HepG2 (cell line): ENCODE measurements at regions of chr16 and their contacts with region 1.

Region 1: DNA sequence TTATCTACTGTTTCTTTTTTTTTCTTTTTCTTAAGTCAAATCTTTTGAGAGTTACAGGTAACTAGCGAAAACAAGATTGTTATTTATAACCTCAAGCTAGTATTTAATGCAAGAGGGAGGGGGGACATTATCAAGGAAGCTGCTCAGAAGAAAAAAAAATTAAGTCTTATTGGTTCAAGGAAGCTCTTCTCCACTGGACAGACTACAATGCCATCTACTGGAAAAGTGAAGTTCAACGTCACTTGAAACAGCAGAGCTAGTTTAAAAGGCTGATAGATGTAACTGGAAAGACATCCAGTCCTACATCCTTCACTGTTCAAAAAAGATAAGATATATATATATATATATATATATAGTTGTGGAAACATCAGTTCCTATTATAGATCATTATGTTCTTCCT is 418.0 kb upstream of the PSMD7 start:
- DNase-seq: peak; percentile 58
- ATAC-seq: peak; percentile 49; the same call in 2 of the 3 replicates
- H3K4me3 ChIP-seq: no peak overlapping the region
- H3K27ac ChIP-seq: no peak overlapping the region
- H3K4me1 ChIP-seq: no peaks in the 10 kb centered on the region
- H3K27me3 ChIP-seq: peaks cover 0 to under 1% of the 10 kb centered on the region in 2 experiments; a peak in 1 of 5 replicates
- CTCF ChIP-seq: peak; percentile 67
- EP300 ChIP-seq: no peak
- POLR2A ChIP-seq: no peak
- RAD21 ChIP-seq: no peak

Region 2: GRCh38 chr16:73565262-73565661 is 313.3 kb before region 1 on chr16:
- CTCF ChIA-PET with region 1: interaction called, 7 read pairs
- POLR2A ChIA-PET with region 1: no interaction called
- in situ Hi-C with region 1: loop called (anchors 5 kb)
- intact Hi-C with region 1: no loop called
- DNase-seq: peak; percentile 23
- ATAC-seq: peak; percentile 70
- H3K4me3 ChIP-seq: no peak overlapping the region
- H3K27ac ChIP-seq: no peak overlapping the region
- H3K4me1 ChIP-seq: no peaks in the 10 kb centered on the region
- H3K27me3 ChIP-seq: peaks cover 0 to 31% of the 10 kb centered on the region in 2 experiments; a peak in 3 of 5 replicates
- CTCF ChIP-seq: peak; percentile 57
- EP300 ChIP-seq: no peak
- POLR2A ChIP-seq: no peak
- RAD21 ChIP-seq: 0 out of 2 replicates have a peak, but pooled peaks have one; percentile 22

Region 3: GRCh38 chr16:73713778-73714495 is 164.7 kb before region 1 on chr16:
- CTCF ChIA-PET with region 1: interaction called, 12 read pairs
- POLR2A ChIA-PET with region 1: no interaction called
- in situ Hi-C with region 1: loop called (anchors 10 kb)
- intact Hi-C with region 1: loop called (anchors 1 kb)
- DNase-seq: peak; percentile 42
- ATAC-seq: peak; percentile 76
- H3K4me3 ChIP-seq: no peak overlapping the region
- H3K27ac ChIP-seq: no peak overlapping the region
- H3K4me1 ChIP-seq: no peaks in the 10 kb centered on the region
- H3K27me3 ChIP-seq: peaks cover 2 to 9% of the 10 kb centered on the region in 2 experiments; a peak in 3 of 5 replicates
- CTCF ChIP-seq: peak; percentile 63
- EP300 ChIP-seq: no peak
- POLR2A ChIP-seq: no peak
- RAD21 ChIP-seq: peak; percentile 33; the same call in 1 of the 2 replicates

Region 4: DNA sequence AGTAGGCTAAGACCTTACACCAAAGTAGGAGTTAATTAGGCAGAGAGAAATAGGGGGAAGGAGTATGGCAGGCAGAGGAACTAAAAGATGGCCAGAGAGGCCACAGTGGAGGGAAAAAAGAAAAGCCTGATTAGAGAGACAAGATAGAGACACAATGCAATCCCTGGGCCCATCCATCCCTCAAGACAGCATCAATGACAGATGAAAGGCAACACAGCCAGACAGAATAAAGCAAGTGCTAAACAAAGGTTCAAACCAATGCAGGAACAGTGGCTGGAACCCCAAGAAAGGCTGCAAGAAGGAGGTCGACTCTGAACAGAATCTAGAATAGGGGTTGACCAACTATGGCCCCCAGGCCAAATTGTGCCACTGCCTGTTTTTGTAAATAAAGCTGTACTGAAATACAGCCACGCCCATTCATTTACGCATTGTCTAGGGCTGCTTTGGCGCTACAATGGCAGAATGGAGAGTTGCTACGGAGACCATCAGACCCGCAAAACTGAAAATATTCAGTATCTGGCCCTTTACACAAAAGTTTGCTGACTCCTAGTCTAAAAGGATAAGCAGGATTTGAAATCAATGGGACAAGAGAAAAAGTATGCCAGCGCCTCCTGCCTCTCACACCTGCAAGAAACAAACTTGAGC is 55.3 kb before region 1 on chr16:
- CTCF ChIA-PET with region 1: no interaction called
- POLR2A ChIA-PET with region 1: no interaction called
- in situ Hi-C with region 1: no loop called
- intact Hi-C with region 1: no loop called
- DNase-seq: no peak
- ATAC-seq: no peak
- H3K4me3 ChIP-seq: no peak overlapping the region
- H3K27ac ChIP-seq: no peak overlapping the region
- H3K4me1 ChIP-seq: no peaks in the 10 kb centered on the region
- H3K27me3 ChIP-seq: peaks cover 0 to 4% of the 10 kb centered on the region in 2 experiments; a peak in 1 of 5 replicates
- CTCF ChIP-seq: no peak
- EP300 ChIP-seq: no peak
- POLR2A ChIP-seq: no peak
- RAD21 ChIP-seq: no peak